Activated B cell treated with CpG ODN at 0.5 μM for 24 hours (primary cell): ENCODE measurements at regions of chr19 and their contacts with region 1.

Region 1: DNA sequence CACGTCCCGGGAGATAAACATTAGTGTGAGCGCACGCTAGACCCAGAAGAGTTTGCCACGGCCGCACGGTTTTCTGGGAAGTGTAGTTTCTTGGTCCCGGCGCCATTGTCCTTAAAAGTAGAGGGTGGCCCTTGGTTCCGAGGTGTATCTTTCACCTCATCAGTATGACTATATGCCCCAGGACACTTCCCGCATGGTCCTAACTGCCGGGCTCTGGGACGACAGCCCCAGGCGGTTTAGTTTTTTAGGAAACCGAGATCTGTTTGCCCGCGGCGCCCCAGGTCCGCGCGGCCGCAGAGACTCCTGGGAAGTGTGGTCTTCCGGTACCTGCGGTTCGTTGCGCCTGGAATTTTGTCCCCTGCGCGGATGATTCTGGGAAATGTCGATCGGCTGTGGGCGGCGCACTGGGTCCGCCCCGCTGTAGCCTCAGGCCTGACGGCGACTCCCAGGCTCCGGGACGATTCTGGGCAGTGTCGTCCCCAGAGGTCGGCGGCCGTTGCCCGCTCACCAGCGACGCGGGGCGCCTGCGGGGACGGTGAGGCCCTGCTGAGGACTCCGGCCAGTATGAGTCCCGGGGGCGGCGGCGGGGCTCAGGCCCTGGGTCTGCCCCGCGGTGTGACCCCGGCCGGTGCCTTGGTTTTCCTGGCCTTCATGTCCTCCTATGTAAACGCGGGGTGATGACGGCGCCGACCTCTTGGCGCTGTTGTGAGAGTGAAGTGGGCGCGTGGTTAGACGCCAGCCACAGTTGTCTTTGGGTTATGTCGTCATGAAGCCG is at the start of gene ZNF181:
- DNase-seq: peak; percentile 72
- ATAC-seq: peak; percentile 88
- H3K4me3 Mint-ChIP-seq: peak within 1 kb of the TSS; percentile 97
- H3K27ac Mint-ChIP-seq: peak within 1 kb of the TSS; percentile 97
- H3K4me1 Mint-ChIP-seq: peaks cover 25% of the 10 kb centered on the region
- H3K27me3 Mint-ChIP-seq: peaks cover 3% of the 10 kb centered on the region
- CTCF ChIP-seq: no peak
- total RNA-seq, gene ZNF181: 8.2 and 8.7 TPM in 2 replicates

Region 2: DNA sequence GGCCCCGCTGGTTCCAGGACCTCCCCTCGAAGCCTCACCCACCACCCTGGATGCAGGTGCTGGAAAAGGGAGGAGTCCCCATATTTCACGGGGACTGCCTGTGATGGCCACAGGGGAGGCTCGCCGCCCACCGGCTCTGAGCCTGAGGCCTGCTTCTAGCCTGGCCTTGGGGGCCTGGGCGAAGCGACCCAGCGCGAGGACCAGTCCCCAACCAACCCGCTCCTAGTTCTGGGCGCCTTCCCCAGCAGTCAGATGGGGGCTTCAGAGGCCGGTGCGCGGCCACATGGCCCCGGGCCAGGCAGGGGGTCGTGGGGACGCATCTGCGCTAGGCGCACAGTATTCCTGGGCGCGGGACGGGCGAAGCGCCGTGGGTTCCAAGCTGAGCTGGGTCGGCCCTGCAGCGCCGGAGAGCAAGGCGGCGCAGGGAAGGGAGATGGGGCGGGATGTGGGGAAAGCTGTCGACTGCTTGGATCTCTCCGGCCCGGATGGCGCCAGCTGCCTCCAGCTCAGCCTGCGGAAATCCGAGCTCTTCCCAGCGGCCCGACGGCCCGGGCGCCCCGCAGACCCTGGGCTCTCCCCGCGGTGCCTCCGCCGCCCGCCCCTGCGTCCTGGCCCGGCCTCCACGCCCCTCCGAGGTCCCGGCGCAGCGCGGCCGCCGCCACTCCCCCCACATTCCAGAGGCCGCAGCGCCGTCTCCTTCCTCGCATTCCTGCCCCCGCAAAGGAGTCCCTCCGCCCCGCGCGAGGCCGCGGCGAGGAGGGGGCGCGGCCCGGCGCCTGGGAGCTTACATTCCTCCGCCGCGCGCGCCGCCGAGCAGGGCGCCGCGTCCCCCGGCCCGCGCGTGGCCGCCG is 252.8 kb before region 1 on chr19 and contains the start of gene WTIP:
- CTCF ChIA-PET with region 1: no interaction called
- POLR2A ChIA-PET with region 1: no interaction called
- intact Hi-C with region 1: no loop called
- DNase-seq: no peak
- ATAC-seq: no peak
- H3K4me3 Mint-ChIP-seq: peak within 1 kb of the TSS; percentile 19
- H3K27ac Mint-ChIP-seq: no peak within 1 kb of the TSS
- H3K4me1 Mint-ChIP-seq: peaks cover 6% of the 10 kb centered on the region
- H3K27me3 Mint-ChIP-seq: peaks cover 34% of the 10 kb centered on the region
- CTCF ChIP-seq: no peak
- total RNA-seq, gene WTIP: 0.07 and 0.38 TPM in 2 replicates

Region 3: GRCh38 chr19:34540811-34541557 is 193.0 kb before region 1 on chr19:
- CTCF ChIA-PET with region 1: no interaction called
- POLR2A ChIA-PET with region 1: no interaction called
- intact Hi-C with region 1: no loop called
- DNase-seq: no peak
- ATAC-seq: no peak
- H3K4me3 Mint-ChIP-seq: no peak overlapping the region
- H3K27ac Mint-ChIP-seq: no peak overlapping the region
- H3K4me1 Mint-ChIP-seq: no peaks in the 10 kb centered on the region
- H3K27me3 Mint-ChIP-seq: peaks cover 15% of the 10 kb centered on the region
- CTCF ChIP-seq: no peak

Region 4: DNA sequence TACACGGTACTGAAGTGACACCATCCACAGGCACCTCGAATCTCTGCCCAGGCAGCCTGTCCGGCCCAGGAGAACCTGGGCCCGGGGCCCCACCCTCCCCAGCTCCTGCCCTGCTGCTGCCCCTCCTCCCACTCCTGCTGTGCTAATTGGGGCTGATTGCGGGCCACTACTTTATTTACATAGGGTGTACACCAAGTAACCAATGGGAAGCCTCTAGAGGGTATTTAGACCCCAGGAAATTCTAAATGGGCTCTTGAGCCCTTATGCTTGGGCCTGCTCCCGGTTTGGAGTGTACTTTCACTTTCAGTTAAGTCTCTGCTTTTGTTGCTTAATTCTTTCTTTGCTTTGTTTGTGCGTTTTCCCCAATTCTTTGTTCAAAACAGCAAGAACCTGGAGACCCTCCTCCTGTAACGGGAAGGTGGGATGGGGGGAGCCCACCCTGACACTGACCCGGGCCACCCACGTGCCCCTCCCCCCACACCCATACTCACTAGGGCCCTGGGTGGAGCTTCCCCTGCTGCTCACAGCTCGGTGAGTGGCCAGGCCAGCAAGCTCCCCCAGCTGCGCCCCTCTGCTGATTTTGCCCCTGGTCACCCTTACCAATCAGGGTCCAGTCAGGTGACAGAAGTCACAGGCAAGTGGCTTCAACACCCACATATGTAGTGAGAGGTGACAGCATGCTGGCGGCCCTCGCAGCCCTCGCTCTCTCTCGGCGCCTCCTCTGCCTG is 66.5 kb before region 1 on chr19:
- CTCF ChIA-PET with region 1: no interaction called
- POLR2A ChIA-PET with region 1: no interaction called
- intact Hi-C with region 1: no loop called
- DNase-seq: no peak
- ATAC-seq: no peak
- H3K4me3 Mint-ChIP-seq: no peak overlapping the region
- H3K27ac Mint-ChIP-seq: no peak overlapping the region
- H3K4me1 Mint-ChIP-seq: peaks cover 13% of the 10 kb centered on the region
- H3K27me3 Mint-ChIP-seq: no peaks in the 10 kb centered on the region
- CTCF ChIP-seq: no peak

Region 5: DNA sequence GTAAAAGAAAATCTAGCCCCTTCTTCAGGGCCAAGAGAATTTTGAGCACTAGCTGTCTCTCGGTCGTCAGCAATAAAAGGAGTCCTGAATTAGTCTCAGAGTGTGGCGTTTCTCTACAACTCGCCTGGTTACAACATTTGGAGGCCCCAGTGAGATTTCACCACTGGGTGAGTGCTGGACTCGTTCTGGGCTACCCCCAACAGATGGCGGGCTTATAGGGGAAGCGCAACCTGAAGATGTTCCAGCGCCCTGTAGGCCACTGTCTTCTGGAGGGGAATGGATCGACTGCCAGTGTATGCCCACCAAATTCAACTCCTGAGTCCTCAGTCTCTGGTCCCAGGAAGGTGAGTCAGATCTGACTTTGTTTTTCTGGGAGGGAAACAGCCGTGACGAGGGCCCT is 11.7 kb before region 1 on chr19:
- CTCF ChIA-PET with region 1: no interaction called
- POLR2A ChIA-PET with region 1: no interaction called
- intact Hi-C with region 1: no loop called
- DNase-seq: no peak
- ATAC-seq: no peak
- H3K4me3 Mint-ChIP-seq: no peak overlapping the region
- H3K27ac Mint-ChIP-seq: no peak overlapping the region
- H3K4me1 Mint-ChIP-seq: no peaks in the 10 kb centered on the region
- H3K27me3 Mint-ChIP-seq: peaks cover 28% of the 10 kb centered on the region
- CTCF ChIP-seq: no peak

Region 6: GRCh38 chr19:34772697-34773554 is 38.9 kb after region 1 on chr19 and contains the start of gene ZNF599:
- CTCF ChIA-PET with region 1: no interaction called
- POLR2A ChIA-PET with region 1: interaction called, 7 read pairs
- intact Hi-C with region 1: loop called (anchors 1 kb)
- DNase-seq: peak; percentile 91
- ATAC-seq: peak; percentile 98
- H3K4me3 Mint-ChIP-seq: peak within 1 kb of the TSS; percentile 93
- H3K27ac Mint-ChIP-seq: peak within 1 kb of the TSS; percentile 86
- H3K4me1 Mint-ChIP-seq: peaks cover 15% of the 10 kb centered on the region
- H3K27me3 Mint-ChIP-seq: peaks cover 15% of the 10 kb centered on the region
- CTCF ChIP-seq: no peak
- total RNA-seq, gene ZNF599: 3.1 and 3.6 TPM in 2 replicates

Region 7: DNA sequence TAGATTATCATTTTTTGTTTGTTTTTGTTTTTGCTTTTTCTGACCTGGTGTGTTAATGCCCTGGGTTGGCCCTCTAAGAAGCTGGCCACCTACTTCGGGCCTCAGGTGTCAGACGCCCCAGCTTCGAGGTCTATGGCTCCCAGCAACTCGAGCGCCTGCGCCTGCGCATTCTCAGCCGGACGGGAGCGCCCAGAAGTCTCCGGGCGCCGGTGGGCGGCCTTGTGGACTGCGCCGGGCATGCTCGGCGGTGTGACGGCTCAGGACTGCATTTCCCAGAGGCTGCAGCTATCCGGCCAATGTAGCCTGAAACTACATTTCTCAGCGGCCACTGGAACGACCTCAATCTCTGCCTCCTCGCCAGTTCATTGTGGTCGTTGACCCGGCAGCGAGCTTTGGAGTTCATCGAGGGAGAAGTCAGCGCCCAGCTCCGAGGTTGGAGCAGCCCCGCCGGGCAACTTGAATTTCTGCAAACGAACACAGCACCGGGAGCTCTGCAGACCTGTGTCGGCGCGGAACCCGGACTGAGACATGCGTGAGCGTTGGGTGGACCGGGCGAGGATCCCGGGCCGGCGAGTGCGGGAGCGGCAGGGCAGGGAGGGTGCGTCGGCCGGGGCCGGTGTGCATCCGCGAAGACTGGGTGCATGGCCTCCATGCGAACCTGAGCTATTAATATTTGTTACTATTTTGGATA is 192.8 kb after region 1 on chr19 and contains the start of gene ZNF30:
- CTCF ChIA-PET with region 1: no interaction called
- POLR2A ChIA-PET with region 1: interaction called, 4 read pairs
- intact Hi-C with region 1: loop called (anchors 10 kb)
- DNase-seq: peak; percentile 75
- ATAC-seq: peak; percentile 98
- H3K4me3 Mint-ChIP-seq: peak within 1 kb of the TSS; percentile 93
- H3K27ac Mint-ChIP-seq: peak within 1 kb of the TSS; percentile 75
- H3K4me1 Mint-ChIP-seq: peaks cover 14% of the 10 kb centered on the region
- H3K27me3 Mint-ChIP-seq: peaks cover 3% of the 10 kb centered on the region
- CTCF ChIP-seq: no peak
- total RNA-seq, gene ZNF30: 2.7 and 4.0 TPM in 2 replicates